Ascending aorta (tissue), 2 donors: ENCODE measurements at regions of chr5 and their contacts with region 1.

Region 1: DNA sequence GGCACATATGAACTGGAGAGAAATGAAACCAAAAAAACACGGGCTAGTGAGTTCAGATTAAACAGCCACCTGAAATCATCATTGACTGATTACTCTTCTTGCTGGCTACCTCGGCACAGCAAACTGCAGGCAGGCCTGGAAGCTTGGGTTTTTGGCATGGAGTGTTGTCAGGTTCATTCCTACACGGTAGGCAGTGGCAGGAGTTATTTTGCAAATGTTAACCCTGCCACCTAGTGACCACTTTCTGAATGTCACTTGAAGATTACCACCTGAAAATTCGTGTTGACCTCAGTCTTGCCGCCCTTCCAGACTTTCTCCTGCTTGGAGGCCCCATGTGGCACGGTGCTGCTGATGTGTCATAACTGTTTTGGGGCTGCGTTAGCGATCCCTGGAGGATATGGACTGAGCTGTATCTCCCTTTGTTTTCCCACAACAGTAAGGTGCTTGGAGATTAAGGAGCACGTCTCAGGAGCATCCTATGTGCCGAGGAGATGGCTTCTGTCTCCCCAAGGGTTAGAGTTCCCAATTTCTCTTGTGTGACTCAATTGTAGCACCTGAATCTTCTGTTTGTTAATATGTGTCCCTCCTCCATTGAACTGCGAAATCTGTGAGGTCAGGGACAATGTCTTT is 12.7 kb upstream of the CD180 start:
- DNase-seq: peak in 1 of 2 donors; percentile 81
- H3K4me3 ChIP-seq: no peak overlapping the region
- H3K27ac ChIP-seq: no peak overlapping the region
- H3K4me1 ChIP-seq: peaks cover 0 to 2% of the 10 kb centered on the region in 2 donors
- H3K27me3 ChIP-seq: no peaks in the 10 kb centered on the region
- CTCF ChIP-seq: peak; percentile 62 to 83 (median 79)

Region 2: GRCh38 chr5:66814146-66814991 is 394.9 kb before region 1 on chr5:
- intact Hi-C with region 1: loop called (anchors 2 kb)
- DNase-seq: no peak
- H3K4me3 ChIP-seq: no peak overlapping the region
- H3K27ac ChIP-seq: no peak overlapping the region
- H3K4me1 ChIP-seq: no peaks in the 10 kb centered on the region
- H3K27me3 ChIP-seq: no peaks in the 10 kb centered on the region
- CTCF ChIP-seq: peak; percentile 34 to 72 (median 71)

Region 3: DNA sequence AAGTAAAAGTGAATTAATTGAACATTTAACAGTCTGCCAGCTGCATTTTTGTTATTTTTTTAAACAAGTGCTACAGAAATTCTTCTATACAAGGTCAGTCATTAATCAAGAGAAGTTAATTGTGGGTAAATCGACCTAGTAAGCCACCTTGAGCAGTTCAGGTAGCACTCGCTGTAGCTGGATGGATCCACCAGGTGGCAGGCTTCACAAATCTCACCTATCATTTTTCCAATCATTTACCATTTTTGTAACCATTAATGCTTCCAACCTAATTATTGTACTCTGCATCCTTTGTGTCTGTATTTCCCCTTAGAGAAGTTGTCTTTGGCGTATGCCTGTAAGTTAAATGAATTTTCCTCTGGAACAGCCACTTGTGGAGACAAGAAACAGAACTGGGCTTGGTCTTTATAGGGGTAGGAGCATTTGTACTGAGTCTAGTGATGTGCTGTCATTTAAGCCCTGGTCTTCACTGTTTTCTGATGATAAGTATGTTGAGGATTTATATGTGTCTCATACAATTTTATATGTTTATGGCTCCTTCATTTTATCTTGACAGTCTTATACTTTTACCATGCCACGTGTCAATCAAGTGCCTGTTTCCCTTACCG is 52.2 kb before region 1 on chr5:
- intact Hi-C with region 1: loop called (anchors 1 kb)
- DNase-seq: no peak
- H3K4me3 ChIP-seq: no peak overlapping the region
- H3K27ac ChIP-seq: no peak overlapping the region
- H3K4me1 ChIP-seq: peaks cover 0 to 5% of the 10 kb centered on the region in 2 donors
- H3K27me3 ChIP-seq: no peaks in the 10 kb centered on the region
- CTCF ChIP-seq: peak; percentile 62 to 81 (median 74)

Region 4: DNA sequence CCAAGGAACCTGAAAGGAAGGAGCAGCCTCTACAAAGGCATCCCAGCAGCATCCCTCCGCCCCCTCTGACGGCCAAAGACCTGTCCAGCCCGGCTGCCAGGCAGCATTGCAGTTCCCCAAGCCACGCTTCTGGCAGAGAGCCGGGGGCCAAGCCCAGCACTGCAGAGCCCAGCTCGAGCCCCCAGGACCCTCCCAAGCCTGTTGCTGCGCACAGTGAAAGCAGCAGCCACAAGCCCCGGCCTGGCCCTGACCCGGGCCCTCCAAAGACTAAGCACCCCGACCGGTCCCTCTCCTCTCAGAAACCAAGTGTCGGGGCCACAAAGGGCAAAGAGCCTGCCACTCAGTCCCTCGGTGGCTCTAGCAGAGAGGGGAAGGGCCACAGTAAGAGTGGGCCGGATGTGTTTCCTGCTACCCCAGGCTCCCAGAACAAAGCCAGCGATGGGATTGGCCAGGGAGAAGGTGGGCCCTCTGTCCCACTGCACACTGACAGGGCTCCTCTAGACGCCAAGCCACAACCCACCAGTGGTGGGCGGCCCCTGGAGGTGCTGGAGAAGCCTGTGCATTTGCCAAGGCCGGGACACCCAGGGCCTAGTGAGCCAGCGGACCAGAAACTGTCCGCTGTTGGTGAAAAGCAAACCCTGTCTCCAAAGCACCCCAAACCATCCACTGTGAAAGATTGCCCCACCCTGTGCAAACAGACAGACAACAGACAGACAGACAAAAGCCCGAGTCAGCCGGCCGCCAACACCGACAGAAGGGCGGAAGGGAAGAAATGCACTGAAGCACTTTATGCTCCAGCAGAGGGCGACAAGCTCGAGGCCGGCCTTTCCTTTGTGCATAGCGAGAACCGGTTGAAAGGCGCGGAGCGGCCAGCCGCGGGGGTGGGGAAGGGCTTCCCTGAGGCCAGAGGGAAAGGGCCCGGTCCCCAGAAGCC is 43.5 kb before region 1 on chr5:
- intact Hi-C with region 1: loop called (anchors 1 kb)
- DNase-seq: peak; percentile 47 to 93
- H3K4me3 ChIP-seq: peak overlapping the region; percentile 40 to 59
- H3K27ac ChIP-seq: peak overlapping the region; percentile 74 to 87
- H3K4me1 ChIP-seq: peaks cover 0 to 13% of the 10 kb centered on the region in 2 donors
- H3K27me3 ChIP-seq: no peaks in the 10 kb centered on the region
- CTCF ChIP-seq: peak; percentile 72 to 89 (median 81)

Region 5: DNA sequence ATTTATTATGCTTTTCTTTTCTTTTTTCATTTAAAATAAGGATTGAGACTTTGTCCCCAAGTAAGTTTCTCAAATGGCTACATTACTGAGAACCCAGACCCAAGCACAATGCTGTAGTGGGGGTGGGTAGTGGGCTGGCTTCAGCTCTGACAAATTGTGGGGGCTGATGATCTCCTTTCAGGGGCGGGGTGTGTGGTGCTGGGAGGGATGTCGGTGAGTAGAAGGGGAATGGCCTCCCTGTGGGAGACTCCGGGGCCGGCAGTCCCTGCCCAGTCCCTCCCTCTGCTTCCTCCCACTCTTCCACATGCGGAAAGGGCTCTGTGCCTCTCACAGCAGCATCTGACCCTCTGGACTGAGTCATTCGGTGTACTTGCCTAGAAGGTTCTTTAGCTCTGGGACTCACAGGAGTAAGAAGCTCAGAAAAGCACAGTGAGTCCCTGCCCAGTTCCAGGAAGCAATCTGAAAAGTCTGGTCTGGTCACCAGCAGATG is 26.9 kb before region 1 on chr5:
- intact Hi-C with region 1: loop called (anchors 2 kb)
- DNase-seq: peak; percentile 72 to 89
- H3K4me3 ChIP-seq: peak overlapping the region in 1 of 2 donors; percentile 3
- H3K27ac ChIP-seq: peak overlapping the region; percentile 49 to 83
- H3K4me1 ChIP-seq: peaks cover 12 to 14% of the 10 kb centered on the region in 2 donors
- H3K27me3 ChIP-seq: no peaks in the 10 kb centered on the region
- CTCF ChIP-seq: no peak